Ascending aorta (tissue), 2 donors: ENCODE measurements at regions of chr17 and their contacts with region 1.

Region 1: DNA sequence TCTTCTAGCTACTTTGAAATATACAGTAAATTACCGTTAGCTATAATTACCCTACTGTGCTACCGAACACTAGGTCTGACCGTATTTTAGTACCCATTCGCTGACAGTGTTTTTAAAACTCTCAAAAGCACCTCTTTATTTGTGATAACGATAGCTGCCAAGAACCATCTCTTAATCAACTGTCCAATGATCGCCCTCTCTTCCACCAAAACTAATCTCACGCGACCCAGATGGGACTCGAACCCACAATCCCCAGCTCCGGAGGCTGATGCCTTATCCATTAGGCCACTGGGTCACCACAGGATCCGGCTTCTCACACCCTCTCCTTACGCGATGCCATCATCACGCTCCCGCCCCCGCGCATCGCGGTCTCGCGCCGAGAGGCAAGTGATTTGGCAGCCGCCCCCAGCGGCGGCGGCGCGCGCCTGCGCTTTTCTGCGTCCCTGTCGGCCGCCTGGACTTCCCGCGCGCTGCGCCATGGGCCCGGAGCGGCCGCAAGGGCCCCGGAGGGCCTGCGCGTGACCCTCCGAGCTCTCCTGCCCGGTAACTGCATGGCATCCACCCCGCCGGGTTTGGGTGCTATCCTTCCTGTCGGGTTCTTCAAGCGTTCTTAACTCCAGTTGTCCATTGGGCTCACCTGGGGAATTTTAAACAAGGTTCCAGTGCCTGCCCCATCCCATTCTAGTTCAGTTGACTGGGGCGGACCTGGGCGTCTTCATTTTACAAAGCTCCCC is 15.7 kb upstream of the KPNA2 start:
- DNase-seq: peak; percentile 91 to 99
- H3K4me3 ChIP-seq: peak overlapping the region; percentile 55 to 74
- H3K27ac ChIP-seq: peak overlapping the region; percentile 79 to 87
- H3K4me1 ChIP-seq: peaks cover 0 to 3% of the 10 kb centered on the region in 2 donors
- H3K27me3 ChIP-seq: no peaks in the 10 kb centered on the region
- CTCF ChIP-seq: peak; percentile 20 to 62 (median 37)

Region 2: GRCh38 chr17:67959288-67959900 is 60.4 kb before region 1 on chr17:
- intact Hi-C with region 1: loop called (anchors 10 kb)
- DNase-seq: no peak
- H3K4me3 ChIP-seq: no peak overlapping the region
- H3K27ac ChIP-seq: no peak overlapping the region
- H3K4me1 ChIP-seq: no peaks in the 10 kb centered on the region
- H3K27me3 ChIP-seq: no peaks in the 10 kb centered on the region
- CTCF ChIP-seq: no peak

Region 3: GRCh38 chr17:67993596-67994361 is 26.1 kb before region 1 on chr17:
- intact Hi-C with region 1: loop called (anchors 1 kb)
- DNase-seq: no peak
- H3K4me3 ChIP-seq: peak overlapping the region; percentile 73 to 91
- H3K27ac ChIP-seq: peak overlapping the region; percentile 91 to 97
- H3K4me1 ChIP-seq: peaks cover 4 to 9% of the 10 kb centered on the region in 2 donors
- H3K27me3 ChIP-seq: no peaks in the 10 kb centered on the region
- CTCF ChIP-seq: no peak

Region 4: GRCh38 chr17:68048996-68049395 is 29.2 kb after region 1 on chr17:
- intact Hi-C with region 1: no loop called
- DNase-seq: peak in 1 of 2 donors; percentile 25
- H3K4me3 ChIP-seq: no peak overlapping the region
- H3K27ac ChIP-seq: no peak overlapping the region
- H3K4me1 ChIP-seq: no peaks in the 10 kb centered on the region
- H3K27me3 ChIP-seq: no peaks in the 10 kb centered on the region
- CTCF ChIP-seq: no peak

Region 5: GRCh38 chr17:68061504-68062313 is 41.9 kb after region 1 on chr17:
- intact Hi-C with region 1: no loop called
- DNase-seq: peak in 1 of 2 donors; percentile 45
- H3K4me3 ChIP-seq: no peak overlapping the region
- H3K27ac ChIP-seq: no peak overlapping the region
- H3K4me1 ChIP-seq: no peaks in the 10 kb centered on the region
- H3K27me3 ChIP-seq: no peaks in the 10 kb centered on the region
- CTCF ChIP-seq: no peak

Region 6: DNA sequence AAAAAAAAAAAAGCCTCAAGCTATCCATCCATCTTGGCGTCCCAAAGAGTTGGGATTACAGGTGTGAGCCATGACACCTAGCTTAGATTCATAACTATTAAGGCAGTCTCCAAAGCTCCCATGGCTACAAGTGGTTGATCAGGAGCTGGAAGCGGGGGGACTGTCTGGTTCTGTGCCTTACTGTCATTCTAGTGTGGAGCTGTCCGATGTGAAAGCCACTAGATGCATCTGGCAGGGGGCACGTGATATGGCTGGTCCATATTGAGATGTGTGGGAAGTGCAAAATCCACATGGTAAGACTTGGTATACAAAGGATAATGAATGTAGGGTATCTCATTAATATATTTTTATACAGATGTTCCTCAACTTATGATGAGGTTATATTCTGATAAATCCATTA is 54.4 kb after region 1 on chr17:
- intact Hi-C with region 1: no loop called
- DNase-seq: no peak
- H3K4me3 ChIP-seq: no peak overlapping the region
- H3K27ac ChIP-seq: no peak overlapping the region
- H3K4me1 ChIP-seq: no peaks in the 10 kb centered on the region
- H3K27me3 ChIP-seq: no peaks in the 10 kb centered on the region
- CTCF ChIP-seq: no peak

Region 7: GRCh38 chr17:69327060-69327831 is 1307.4 kb after region 1 on chr17 and contains the start of gene ABCA5:
- intact Hi-C with region 1: loop called (anchors 1 kb)
- DNase-seq: peak; percentile 46 to 90
- H3K4me3 ChIP-seq: peak within 1 kb of the TSS; percentile 88 to 90
- H3K27ac ChIP-seq: peak within 1 kb of the TSS; percentile 62 to 63
- H3K4me1 ChIP-seq: peaks cover 0 to 15% of the 10 kb centered on the region in 2 donors
- H3K27me3 ChIP-seq: no peaks in the 10 kb centered on the region
- CTCF ChIP-seq: no peak
- total RNA-seq, gene ABCA5: 7.8 TPM